ENCODE measurements at regions of chr13 and their contacts with region 1.

Region 1: DNA sequence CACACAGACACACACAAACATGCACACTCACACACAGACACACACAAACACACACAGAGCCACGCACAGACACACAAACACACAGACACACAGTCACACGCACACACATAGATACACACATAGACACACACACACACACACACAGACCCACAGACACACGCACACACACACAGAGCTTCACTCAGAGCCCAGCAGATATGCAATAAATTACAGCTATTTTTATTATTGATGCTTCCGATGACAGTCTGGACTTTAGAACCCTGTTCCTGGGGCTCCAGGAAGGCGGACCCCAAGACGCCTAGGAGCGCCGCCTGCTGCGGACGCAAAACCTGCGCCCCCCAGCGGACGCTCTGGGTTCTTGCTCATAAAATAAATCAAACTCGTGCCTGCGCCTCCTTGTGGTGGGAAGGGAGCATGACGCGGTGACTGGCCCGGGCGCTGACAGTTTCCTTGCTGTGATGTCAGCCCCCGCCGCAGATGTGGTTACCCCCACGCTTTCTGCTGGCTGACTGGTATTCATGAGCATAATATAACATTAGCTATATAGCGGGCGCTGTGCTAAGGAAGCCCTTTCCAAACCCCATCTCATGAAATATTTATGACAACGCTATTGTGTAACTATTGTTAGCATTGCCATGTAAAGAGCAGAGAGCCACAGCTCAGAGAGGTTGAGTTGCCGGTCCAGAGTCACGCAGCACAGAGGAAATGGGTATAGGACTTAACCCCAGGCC is 64.4 kb upstream of the TM9SF2 start:
- DNase-seq: peak; percentile 92
- ATAC-seq: peak; percentile 92
- H3K4me3 ChIP-seq: no peak overlapping the region
- H3K27ac ChIP-seq: no peak overlapping the region
- H3K4me1 ChIP-seq: peaks cover 17% of the 10 kb centered on the region
- H3K27me3 ChIP-seq: peaks cover 13% of the 10 kb centered on the region
- CTCF ChIP-seq: peak; percentile 100

Region 2: GRCh38 chr13:99176309-99177276 is 260.3 kb before region 1 on chr13:
- intact Hi-C with region 1: loop called (anchors 5 kb)
- DNase-seq: peak; percentile 79
- ATAC-seq: peak; percentile 98
- H3K4me3 ChIP-seq: no peak overlapping the region
- H3K27ac ChIP-seq: no peak overlapping the region
- H3K4me1 ChIP-seq: no peaks in the 10 kb centered on the region
- H3K27me3 ChIP-seq: peaks cover 17% of the 10 kb centered on the region
- CTCF ChIP-seq: peak; percentile 92

Region 3: GRCh38 chr13:99269627-99270241 is 167.1 kb before region 1 on chr13:
- intact Hi-C with region 1: loop called (anchors 10 kb)
- DNase-seq: no peak
- ATAC-seq: peak; percentile 87
- H3K4me3 ChIP-seq: no peak overlapping the region
- H3K27ac ChIP-seq: no peak overlapping the region
- H3K4me1 ChIP-seq: no peaks in the 10 kb centered on the region
- H3K27me3 ChIP-seq: no peaks in the 10 kb centered on the region
- CTCF ChIP-seq: peak; percentile 71

Measured in upper lobe of right lung (tissue), 1 donor.